Sciatic nerve (tissue), 2 donors: ENCODE measurements at regions of chr17 and their contacts with region 1.

Region 1: DNA sequence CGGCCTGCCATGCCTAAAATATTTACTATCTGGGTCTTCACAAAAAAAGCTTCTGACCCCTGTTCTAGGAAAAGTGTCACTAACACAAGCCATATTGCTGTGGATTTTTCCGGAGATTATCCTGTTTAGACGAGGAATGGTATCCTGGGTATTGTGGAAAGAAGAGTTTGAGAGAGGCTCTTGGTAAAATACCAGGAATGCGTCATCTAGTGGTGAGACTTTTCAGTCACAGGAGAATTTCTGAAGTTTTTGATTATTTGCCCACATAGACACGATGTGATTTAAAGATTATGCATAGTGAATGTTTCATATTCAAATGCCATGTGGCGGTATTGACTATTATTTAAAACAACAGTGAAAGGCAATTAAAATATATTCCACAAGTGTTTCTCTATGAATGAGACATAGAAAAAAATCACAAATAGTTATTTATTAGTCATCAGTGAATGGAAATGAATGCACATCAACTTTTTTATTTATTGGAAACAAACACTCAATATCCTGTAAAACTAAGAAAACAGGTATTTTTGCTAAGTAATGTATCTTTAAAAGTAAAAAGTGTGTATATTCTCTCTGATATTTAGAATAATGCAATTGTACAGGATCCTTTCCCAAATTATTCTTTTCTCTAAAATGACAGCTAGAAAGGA is 7.8 kb downstream of the KRT28 start:
- DNase-seq: no peak
- ATAC-seq: peak; percentile 92

Region 2: DNA sequence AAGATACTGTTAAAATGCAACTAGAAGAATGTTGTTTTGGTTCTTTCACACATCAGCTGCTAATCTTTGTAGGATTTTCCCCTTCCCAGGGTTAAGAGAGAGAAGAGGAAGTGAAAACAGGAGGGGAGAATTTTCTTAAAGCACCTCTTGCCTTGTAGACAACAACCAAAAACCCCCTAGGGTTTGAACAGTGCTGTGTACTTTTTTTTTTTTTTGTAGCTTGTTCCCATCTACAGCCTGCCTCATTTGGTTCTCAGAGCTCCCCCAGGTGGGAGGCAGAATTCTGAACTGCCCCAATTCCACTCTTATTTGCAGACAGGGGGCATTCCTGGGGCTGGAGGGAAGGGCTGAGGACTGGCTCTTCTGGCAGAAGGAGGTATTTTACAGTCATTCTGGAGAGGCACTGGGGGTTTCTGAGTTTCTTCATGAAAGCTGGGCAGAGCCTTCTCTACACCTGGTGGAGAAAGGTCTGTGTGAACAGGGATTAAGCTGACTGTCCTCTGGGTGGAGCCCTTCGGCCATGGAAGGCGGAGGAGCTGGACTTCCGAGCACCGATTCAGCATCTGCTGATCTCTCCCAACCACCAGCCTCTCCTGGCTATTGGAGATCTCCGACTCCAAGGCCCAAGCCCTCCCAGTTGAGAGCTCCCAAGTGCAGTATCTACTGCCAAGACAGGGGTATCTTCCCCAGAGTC is 176.5 kb before region 1 on chr17:
- intact Hi-C with region 1: loop called (anchors 10 kb)
- DNase-seq: peak; percentile 75
- ATAC-seq: peak; percentile 56

Region 3: GRCh38 chr17:41521574-41522261 is 729.8 kb after region 1 on chr17:
- intact Hi-C with region 1: no loop called
- DNase-seq: no peak
- ATAC-seq: no peak

Region 4: DNA sequence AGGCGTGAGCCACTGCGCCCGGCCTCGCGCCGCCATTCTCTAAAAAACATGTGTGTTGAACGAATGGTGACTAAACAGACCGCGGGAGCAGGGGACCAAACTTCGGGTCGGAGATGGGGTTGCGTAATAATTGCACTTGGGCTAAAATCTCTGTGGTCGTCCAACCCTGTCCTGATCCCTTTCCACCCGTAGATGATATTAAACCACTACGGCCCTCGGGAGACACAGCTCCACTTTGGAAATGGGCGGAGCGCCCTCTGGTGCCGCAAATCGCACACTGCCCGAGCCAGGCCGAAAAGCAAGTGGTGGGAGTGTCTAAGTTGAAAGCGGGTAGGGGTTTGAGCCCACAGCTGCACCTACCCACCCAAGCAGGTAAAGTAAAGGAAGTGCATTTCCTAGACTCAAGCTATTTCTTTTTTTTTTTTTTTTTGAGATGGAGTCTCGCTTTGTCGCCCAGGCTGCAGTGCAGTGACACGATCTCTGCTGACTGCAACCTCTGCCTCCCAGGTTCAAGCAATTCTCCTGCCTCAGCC is 1614.1 kb after region 1 on chr17:
- intact Hi-C with region 1: no loop called
- DNase-seq: peak; percentile 93
- ATAC-seq: peak; percentile 77

Region 5: DNA sequence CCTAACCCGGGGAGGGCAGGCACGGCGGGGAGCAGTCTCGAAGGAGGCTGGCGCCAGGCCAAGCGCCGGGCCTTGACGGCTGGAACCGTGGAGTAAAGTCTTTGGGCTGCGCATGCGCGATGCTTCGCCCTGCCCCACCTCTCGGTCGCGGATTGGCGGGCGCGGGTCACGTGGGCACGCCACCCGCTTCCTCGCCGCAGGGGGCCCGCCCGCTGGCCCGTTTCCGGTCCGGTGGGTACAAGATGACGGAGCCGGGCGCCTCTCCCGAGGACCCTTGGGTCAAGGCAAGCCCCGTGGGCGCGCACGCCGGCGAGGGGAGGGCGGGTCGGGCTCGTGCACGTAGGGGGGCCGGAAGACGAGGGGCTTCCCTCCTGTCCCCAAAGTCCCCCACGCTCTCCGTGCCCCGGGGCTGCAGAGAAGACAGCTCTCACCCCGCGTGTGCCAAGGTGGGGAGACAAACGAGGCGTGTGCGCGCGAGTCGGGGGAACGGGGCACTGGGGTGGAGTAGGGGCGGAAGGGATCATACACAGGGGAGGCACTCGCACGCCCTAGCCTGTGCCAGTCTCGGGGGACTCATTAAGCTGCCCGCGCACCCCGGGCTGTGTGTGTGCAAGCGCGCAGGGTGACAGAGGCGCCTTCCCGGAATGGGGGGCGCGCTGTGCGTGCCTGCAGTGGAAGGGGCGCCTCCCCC is 1775.1 kb after region 1 on chr17 and contains the start of gene MLX:
- intact Hi-C with region 1: no loop called
- DNase-seq: peak; percentile 97
- ATAC-seq: peak; percentile 89
- total RNA-seq, gene MLX: 26.6 TPM